Aorta (tissue), 5 donors: ENCODE measurements at regions of chr17 and their contacts with region 1.

Region 1: DNA sequence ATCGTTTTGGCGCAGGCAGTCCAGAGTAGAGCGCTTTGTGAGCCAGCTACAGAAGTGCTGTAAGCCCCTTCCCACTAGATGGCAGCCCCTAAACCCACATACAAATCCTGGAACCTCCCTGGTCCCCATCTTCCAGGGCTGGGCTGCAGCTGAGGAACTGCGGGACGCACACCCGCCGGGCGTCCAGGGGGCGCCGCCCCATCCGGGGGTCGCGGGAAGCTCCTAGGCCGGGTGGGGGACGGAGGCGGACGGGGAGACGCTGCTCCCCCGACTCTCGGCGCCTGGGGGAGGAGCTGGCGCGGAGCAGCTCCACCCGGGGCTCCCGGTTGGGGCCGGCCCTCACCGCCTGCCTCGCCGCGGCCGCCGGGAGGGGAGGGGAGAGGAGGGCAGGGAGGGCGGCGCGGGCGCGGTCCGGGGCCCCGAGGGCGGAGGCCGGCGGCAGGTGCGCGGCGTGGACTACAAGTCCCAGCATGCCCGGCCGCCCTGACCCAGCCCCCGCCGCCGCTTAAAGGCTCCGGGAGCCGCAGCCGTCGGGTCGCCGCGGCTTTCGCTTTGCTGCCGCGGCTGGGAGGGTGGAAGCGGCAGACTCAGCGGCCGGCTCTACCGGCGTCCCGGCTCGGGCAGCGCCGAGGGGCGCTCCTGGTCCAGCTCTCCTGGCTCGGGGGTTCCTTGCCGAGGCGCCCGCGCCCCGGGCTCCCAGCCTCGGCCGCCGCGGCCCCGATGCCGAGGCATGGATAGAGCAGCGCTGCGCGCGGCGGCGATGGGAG is at the start of gene KSR1:
- DNase-seq: peak; percentile 89 to 91
- ATAC-seq: peak; percentile 89
- H3K4me3 ChIP-seq: peak within 1 kb of the TSS; percentile 87 to 93
- H3K27ac ChIP-seq: peak within 1 kb of the TSS; percentile 31 to 34
- H3K4me1 ChIP-seq: no peaks in the 10 kb centered on the region
- H3K27me3 ChIP-seq: no peaks in the 10 kb centered on the region
- total RNA-seq, gene KSR1: 38.4 to 75.7 TPM

Region 2: DNA sequence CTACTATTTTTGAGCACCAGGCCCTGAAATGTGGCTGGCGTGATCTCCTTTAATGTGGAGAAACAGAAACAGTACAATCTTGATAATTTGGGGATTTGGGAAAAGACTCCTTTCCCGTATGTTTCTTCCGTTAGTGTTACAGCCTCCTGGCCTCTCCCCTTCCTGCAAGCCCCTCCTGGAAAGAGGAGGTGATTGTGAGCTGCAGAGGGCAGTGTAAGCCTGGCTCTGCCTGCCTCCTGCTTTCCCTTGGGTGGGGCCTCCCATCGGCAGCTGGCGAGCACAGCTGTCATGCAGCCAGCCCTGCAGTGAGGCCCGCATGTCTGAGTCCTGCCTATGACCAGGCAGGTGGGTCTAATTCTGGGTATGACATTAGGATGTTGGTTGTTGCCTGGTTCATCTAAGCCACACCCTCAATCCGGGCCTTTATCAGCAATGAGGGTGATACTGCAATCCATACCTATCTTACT is 210.8 kb before region 1 on chr17:
- intact Hi-C with region 1: loop called in 1 of 2 experiments (anchors 5 kb)
- DNase-seq: peak; percentile 93 to 94
- ATAC-seq: peak; percentile 95
- H3K4me3 ChIP-seq: no peak overlapping the region
- H3K27ac ChIP-seq: peak overlapping the region; percentile 30 to 63
- H3K4me1 ChIP-seq: no peaks in the 10 kb centered on the region
- H3K27me3 ChIP-seq: no peaks in the 10 kb centered on the region

Region 3: GRCh38 chr17:27353461-27354050 is 102.5 kb before region 1 on chr17:
- intact Hi-C with region 1: loop called (anchors 5 kb)
- DNase-seq: peak; percentile 96 to 97
- ATAC-seq: peak; percentile 96
- H3K4me3 ChIP-seq: peak overlapping the region in 1 of 2 donors; percentile 59
- H3K27ac ChIP-seq: peak overlapping the region; percentile 58 to 79
- H3K4me1 ChIP-seq: no peaks in the 10 kb centered on the region
- H3K27me3 ChIP-seq: no peaks in the 10 kb centered on the region

Region 4: GRCh38 chr17:27381007-27381501 is 75.0 kb before region 1 on chr17:
- intact Hi-C with region 1: loop called in 1 of 2 experiments (anchors 5 kb)
- DNase-seq: peak; percentile 83 to 92
- ATAC-seq: peak; percentile 45
- H3K4me3 ChIP-seq: no peak overlapping the region
- H3K27ac ChIP-seq: no peak overlapping the region
- H3K4me1 ChIP-seq: no peaks in the 10 kb centered on the region
- H3K27me3 ChIP-seq: no peaks in the 10 kb centered on the region

Region 5: GRCh38 chr17:27506348-27507231 is 50.5 kb after region 1 on chr17:
- intact Hi-C with region 1: loop called in 1 of 2 experiments (anchors 10 kb)
- DNase-seq: no peak
- ATAC-seq: no peak
- H3K4me3 ChIP-seq: no peak overlapping the region
- H3K27ac ChIP-seq: no peak overlapping the region
- H3K4me1 ChIP-seq: no peaks in the 10 kb centered on the region
- H3K27me3 ChIP-seq: no peaks in the 10 kb centered on the region

Region 6: GRCh38 chr17:27609611-27610303 is 153.7 kb after region 1 on chr17:
- intact Hi-C with region 1: no loop called
- DNase-seq: peak; percentile 50 to 60
- ATAC-seq: no peak
- H3K4me3 ChIP-seq: no peak overlapping the region
- H3K27ac ChIP-seq: no peak overlapping the region
- H3K4me1 ChIP-seq: no peaks in the 10 kb centered on the region
- H3K27me3 ChIP-seq: no peaks in the 10 kb centered on the region

Region 7: DNA sequence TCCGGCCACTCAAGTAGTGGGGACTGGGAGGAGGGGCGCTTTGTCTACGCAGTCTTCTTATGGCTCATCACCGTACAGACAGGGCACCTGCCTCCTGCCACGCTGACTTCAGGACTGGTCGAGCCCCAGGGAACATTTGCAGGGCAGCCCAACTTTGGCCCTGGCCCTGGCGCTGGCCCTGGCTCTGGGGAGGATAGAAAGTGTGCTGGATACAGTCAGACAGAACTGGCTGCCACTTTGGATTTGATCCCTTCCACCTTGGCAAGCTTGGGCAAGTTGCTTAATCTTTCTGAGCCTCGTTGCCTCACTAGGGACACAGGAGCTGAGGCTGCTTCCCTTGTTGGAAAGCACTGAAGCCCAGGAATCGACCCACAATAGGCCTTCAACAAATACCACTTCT is 188.5 kb after region 1 on chr17:
- intact Hi-C with region 1: no loop called
- DNase-seq: no peak
- ATAC-seq: peak; percentile 45
- H3K4me3 ChIP-seq: no peak overlapping the region
- H3K27ac ChIP-seq: no peak overlapping the region
- H3K4me1 ChIP-seq: no peaks in the 10 kb centered on the region
- H3K27me3 ChIP-seq: no peaks in the 10 kb centered on the region

Region 8: DNA sequence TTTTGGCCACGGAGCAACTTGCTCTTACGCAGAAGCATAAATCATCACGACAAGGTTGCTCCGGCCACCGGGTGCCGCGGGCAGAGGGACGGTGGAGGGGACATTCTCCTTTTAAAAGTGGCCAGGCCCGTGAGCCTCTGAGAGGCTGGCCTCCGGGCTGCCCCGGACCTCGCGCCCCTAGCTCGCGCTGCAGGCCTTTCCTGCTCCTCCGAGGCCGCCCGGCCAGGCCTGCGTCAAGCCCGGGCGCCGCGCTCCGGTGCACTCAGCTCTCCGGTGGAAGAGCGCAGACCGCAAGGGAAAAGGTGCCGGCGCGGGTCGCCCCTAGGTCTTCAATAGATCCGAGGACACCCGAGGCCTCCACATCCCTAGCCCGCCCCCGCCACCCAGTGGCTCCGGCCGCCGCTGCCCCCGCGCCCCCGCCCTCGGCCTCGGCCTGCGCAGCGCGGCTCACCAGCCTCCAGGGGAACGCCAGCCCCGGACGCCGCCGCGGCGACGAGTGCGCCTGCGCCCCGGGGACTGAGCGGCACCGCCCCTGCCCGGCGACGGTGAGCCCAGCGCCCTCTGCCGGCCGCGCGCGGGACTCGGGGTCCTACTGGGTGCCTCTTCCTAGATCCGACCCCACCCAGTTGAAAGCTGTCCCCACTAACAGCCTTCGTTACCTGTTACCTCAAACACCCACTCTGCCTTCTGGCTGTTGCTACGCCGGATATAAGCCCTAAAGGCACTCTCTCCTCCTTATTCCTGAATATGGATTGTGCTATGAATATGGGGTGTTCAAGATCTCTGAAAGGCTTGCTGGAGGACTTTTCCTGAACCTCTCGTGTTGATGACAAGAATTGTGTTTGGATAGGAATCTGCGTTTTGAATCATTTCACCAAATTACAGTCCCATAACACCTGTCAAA is 437.0 kb after region 1 on chr17 and contains the start of gene LYRM9:
- intact Hi-C with region 1: no loop called
- DNase-seq: peak; percentile 94 to 98
- ATAC-seq: peak; percentile 99
- H3K4me3 ChIP-seq: peak within 1 kb of the TSS; percentile 63 to 96
- H3K27ac ChIP-seq: peak within 1 kb of the TSS in 1 of 2 donors; percentile 49
- H3K4me1 ChIP-seq: peaks cover 0 to 2% of the 10 kb centered on the region in 2 donors
- H3K27me3 ChIP-seq: no peaks in the 10 kb centered on the region
- total RNA-seq, gene LYRM9: 7.8 to 9.8 TPM